ENCODE measurements at regions of chr16 and their contacts with region 1.

Region 1: DNA sequence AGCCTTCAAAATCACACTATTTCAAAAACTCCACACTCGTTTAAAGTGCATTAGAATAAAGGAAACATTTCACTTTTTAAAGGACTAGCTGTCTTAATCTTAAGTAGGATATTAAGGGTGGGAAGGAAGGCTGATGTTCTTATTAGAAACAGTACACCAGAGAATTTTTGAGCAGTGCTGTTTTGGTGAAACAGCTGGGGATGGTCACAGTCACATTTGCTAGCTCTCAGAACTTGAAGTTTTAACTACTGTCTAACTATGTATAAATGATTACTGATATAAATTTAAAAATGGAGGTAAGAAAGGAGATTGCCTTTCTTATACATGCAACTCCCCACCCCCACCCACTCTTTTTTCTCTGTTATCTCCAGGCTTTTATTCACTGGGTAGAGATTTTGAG is 38.5 kb upstream of the SLC5A11 start:
- DNase-seq: no peak
- H3K4me3 ChIP-seq: no peak overlapping the region
- H3K27ac ChIP-seq: no peak overlapping the region
- H3K4me1 ChIP-seq: no peaks in the 10 kb centered on the region
- H3K27me3 ChIP-seq: no peaks in the 10 kb centered on the region
- CTCF ChIP-seq: no peak

Region 2: GRCh38 chr16:24562811-24563210 is 244.5 kb before region 1 on chr16:
- CTCF ChIA-PET with region 1: no interaction called
- POLR2A ChIA-PET with region 1: no interaction called
- intact Hi-C with region 1: loop called (anchors 5 kb)
- DNase-seq: no peak
- H3K4me3 ChIP-seq: no peak overlapping the region
- H3K27ac ChIP-seq: no peak overlapping the region
- H3K4me1 ChIP-seq: no peaks in the 10 kb centered on the region
- H3K27me3 ChIP-seq: no peaks in the 10 kb centered on the region
- CTCF ChIP-seq: no peak

Region 3: DNA sequence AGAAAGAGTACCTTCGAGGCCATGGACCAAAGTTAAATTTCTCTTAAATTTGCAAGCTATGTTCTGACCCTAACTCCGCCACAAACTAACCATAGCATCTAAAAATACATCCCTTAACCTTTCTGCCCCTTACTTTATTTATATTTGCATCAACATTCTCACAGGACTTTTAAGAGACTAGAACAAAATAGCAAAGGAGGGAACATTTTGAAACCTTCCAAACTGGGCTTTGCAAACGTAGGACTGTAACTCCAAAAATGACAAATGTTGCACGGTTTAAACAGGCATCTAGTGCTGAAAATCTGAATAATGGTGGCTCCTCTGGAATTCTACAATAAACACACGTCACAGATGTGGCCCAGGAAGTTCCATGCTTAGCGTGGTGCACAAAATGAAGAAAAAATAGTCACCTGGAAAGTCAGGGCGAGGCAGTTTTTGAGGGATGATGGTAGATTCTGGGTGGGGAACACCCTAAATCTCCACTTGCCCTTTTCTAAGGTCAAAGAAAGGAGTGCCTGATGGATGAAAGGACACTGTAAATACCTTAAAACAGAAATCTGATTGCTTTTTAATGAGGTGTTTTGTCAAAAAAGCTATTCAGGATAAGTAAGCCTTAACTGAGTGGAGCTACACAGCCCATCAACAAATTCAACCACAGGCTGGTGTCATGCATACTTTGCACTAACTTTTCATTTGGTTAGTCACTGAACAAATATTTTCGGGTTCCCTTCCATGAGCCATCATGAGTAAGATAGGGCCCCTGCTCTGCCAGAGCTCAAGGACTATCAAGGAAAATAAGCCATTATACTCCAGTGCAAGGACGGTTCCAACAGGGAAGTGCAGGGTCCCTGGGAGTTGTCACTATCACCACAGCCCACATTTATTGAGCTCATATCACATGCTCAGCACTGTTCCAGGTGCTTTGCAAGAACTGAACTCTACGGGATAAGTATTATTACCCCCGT is 186.7 kb after region 1 on chr16:
- CTCF ChIA-PET with region 1: no interaction called
- POLR2A ChIA-PET with region 1: no interaction called
- intact Hi-C with region 1: no loop called
- DNase-seq: no peak
- H3K4me3 ChIP-seq: no peak overlapping the region
- H3K27ac ChIP-seq: no peak overlapping the region
- H3K4me1 ChIP-seq: peaks cover 18% of the 10 kb centered on the region
- H3K27me3 ChIP-seq: no peaks in the 10 kb centered on the region
- CTCF ChIP-seq: no peak

Region 4: DNA sequence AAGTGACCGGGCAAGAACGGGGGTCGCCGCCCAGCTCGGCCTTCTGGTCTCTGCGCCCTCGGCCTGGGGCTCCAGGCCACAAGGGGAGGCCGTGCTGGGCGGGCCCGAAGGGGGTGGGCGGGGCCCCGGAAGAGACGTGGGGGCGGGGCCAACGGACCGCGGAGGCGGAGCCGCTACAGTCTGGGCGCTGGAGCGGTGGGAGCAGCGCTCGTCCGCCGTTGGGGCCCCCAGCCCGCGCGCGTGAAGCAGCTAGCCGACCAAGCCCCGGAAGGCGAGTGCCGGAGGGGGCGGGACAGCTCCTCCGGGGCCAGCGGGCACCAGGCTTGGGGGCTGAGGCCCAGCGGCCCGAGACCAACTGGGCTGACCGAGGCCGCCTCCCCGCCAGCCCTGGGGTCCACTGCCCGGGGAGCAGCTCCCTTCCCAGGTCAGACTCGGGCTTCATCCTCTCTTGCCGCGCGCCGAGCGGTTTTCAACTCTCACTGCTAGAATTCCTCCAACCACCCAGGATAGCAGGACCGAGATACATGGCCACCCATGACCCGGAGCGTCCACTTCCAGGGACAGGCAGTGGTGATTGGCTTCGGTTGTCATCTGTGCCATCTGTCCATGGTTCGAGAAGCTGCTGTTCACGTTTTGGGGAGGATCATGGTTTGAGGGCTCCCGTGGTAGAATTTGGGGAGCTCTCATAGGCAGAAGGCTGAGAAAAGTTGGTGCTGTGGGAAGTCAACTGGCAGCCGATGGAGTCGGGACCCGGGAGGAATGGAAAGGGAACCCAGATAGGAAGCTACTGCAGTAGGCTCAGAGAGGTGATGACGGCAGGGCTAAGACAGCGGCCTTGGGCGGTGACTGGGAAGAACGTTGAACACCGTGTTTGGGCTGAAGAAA is 259.7 kb after region 1 on chr16:
- CTCF ChIA-PET with region 1: interaction called, 11 read pairs
- POLR2A ChIA-PET with region 1: no interaction called
- intact Hi-C with region 1: no loop called
- DNase-seq: peak; percentile 77
- H3K4me3 ChIP-seq: peak overlapping the region; percentile 68
- H3K27ac ChIP-seq: peak overlapping the region; percentile 76
- H3K4me1 ChIP-seq: peaks cover 4% of the 10 kb centered on the region
- H3K27me3 ChIP-seq: no peaks in the 10 kb centered on the region
- CTCF ChIP-seq: no peak

Region 5: GRCh38 chr16:25078386-25078978 is 271.2 kb after region 1 on chr16:
- CTCF ChIA-PET with region 1: no interaction called
- POLR2A ChIA-PET with region 1: no interaction called
- intact Hi-C with region 1: no loop called
- DNase-seq: no peak
- H3K4me3 ChIP-seq: no peak overlapping the region
- H3K27ac ChIP-seq: no peak overlapping the region
- H3K4me1 ChIP-seq: no peaks in the 10 kb centered on the region
- H3K27me3 ChIP-seq: no peaks in the 10 kb centered on the region
- CTCF ChIP-seq: no peak